Posterior vena cava (tissue), 2 donors: ENCODE measurements at regions of chr20 and their contacts with region 1.

Region 1: GRCh38 chr20:35215066-35215956 is 11.2 kb upstream of the MMP24 start:
- DNase-seq: no peak

Region 2: GRCh38 chr20:34834459-34834893 is 380.8 kb before region 1 on chr20:
- intact Hi-C with region 1: loop called in 1 of 2 experiments (anchors 10 kb)
- DNase-seq: no peak

Region 3: DNA sequence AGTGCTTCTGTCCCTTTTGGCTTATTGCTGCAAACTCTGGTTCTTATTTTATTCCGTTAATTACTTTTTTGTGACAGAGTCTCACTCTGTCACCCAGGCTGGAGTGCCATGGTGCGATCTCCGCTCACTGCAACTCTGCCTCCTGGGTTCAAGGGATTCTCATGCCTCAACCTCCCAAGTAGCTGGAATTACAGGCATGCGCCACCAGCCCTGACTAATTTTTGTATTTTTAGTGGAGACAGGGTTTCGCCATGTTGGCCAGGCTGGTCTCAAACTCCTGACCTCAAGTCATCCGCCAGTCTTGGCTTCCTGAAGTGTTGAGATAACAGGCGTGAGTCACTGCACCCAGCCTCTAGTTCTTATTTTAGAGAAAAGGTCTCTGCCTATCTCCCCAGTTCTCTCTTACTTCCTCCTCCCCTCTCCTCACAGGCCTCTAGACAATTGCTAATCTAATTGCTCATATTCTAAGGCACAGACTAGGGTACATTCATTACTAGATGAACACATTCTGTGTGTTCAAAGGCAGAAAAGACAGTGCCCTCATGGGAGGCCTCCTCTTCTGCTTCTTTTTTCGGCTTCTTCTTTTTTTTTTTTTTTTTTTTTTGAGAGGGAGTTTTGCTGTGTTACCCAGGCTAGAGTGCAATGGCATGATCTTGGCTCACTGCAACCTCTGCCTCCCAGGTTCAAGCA is 95.2 kb before region 1 on chr20:
- intact Hi-C with region 1: no loop called
- DNase-seq: peak; percentile 90

Region 4: DNA sequence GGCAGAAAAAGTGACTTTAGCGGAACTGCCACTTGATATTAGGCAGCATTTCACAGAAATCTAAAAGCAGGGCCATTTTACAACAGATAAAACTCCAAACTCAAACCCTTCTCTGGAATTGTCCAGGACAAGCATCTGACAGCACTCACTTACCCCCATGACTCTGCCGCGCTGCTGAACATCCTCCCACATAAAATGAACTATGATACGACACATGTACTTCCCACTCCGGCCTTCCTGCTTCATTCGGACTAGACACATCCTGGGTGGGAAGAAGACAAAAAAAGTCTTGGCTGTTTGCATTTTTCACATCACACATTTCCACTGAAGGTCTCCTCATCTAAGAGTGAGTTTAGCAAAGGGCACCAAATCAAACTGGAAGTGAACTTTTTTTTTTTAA is 131.7 kb after region 1 on chr20:
- intact Hi-C with region 1: no loop called
- DNase-seq: no peak

Region 5: DNA sequence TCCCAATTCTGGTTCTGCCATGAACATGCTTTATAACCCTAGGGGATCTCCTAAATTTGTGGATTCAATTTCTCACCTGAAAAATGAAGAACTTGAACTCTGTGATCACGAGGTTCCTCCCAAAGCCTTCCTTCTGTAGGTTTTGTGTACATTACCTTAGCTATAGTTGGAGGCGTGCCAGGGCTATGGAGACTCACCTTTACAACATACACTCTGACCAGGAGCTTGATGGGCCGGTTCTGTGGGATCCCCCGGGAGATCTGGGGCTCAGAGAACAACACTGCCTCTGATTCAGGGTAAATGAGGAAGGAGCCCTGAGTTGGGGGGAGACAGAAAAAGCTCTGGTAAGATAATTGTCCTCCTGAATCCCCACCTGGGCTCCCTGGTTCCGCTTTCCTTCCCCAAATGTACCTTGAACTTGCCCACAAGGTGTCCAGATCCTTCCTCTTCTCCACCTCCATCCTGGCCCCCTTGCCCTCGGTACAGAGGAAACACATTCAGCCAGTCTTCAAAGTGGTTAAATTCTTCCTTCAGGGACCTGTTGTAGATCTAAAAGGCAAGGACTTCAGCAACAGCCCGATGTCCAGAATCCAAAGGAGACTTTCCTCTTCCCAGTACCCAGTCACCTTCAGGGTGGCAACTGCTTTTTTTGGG is 360.8 kb after region 1 on chr20:
- intact Hi-C with region 1: no loop called
- DNase-seq: peak; percentile 26